T-cell (primary cell): ENCODE measurements at regions of chr6 and their contacts with region 1.

Region 1: GRCh38 chr6:106223300-106223930 is 102.1 kb downstream of the ATG5 start:
- DNase-seq: peak; percentile 22 to 87 (median 68)
- ATAC-seq: peak; percentile 62 to 84 (median 69)
- H3K4me3 ChIP-seq: no peak overlapping the region
- H3K4me3 Mint-ChIP-seq: no peak overlapping the region
- H3K27ac ChIP-seq: no peak overlapping the region
- H3K27ac Mint-ChIP-seq: no peak overlapping the region
- H3K4me1 ChIP-seq: no peaks in the 10 kb centered on the region
- H3K4me1 Mint-ChIP-seq: peaks cover 24 to 30% (median 28%) of the 10 kb centered on the region in 3 donors
- H3K27me3 ChIP-seq: no peaks in the 10 kb centered on the region
- H3K27me3 Mint-ChIP-seq: no peaks in the 10 kb centered on the region

Region 2: DNA sequence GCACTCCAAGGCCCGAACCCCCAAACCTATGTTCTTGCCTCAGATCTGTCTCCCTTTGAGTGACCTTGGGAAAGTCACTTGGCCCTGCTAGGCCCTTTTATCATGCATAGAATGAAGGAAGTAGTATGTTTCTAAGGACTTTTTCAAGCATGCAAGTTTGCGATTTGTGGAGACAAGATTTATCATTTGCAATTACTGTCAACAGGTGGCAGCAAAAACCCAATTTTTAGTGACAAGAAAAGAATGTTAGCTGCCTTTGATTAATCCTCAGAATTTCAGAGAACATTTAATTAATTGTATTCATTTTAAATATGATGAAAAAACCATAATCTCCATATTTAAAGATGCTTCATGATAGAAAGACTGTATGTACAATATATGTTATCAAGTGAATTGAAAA is 792.2 kb before region 1 on chr6:
- CTCF ChIA-PET with region 1: interaction called, 8 to 62 read pairs
- POLR2A ChIA-PET with region 1: no interaction called
- DNase-seq: peak in 7 of 35 experiments; percentile 6 to 73 (median 13)
- ATAC-seq: no peak
- H3K4me3 ChIP-seq: no peak overlapping the region
- H3K4me3 Mint-ChIP-seq: no peak overlapping the region
- H3K27ac ChIP-seq: no peak overlapping the region
- H3K27ac Mint-ChIP-seq: no peak overlapping the region
- H3K4me1 ChIP-seq: no peaks in the 10 kb centered on the region
- H3K4me1 Mint-ChIP-seq: no peaks in the 10 kb centered on the region
- H3K27me3 ChIP-seq: no peaks in the 10 kb centered on the region
- H3K27me3 Mint-ChIP-seq: peaks cover 3 to 5% of the 10 kb centered on the region in 2 donors

Region 3: DNA sequence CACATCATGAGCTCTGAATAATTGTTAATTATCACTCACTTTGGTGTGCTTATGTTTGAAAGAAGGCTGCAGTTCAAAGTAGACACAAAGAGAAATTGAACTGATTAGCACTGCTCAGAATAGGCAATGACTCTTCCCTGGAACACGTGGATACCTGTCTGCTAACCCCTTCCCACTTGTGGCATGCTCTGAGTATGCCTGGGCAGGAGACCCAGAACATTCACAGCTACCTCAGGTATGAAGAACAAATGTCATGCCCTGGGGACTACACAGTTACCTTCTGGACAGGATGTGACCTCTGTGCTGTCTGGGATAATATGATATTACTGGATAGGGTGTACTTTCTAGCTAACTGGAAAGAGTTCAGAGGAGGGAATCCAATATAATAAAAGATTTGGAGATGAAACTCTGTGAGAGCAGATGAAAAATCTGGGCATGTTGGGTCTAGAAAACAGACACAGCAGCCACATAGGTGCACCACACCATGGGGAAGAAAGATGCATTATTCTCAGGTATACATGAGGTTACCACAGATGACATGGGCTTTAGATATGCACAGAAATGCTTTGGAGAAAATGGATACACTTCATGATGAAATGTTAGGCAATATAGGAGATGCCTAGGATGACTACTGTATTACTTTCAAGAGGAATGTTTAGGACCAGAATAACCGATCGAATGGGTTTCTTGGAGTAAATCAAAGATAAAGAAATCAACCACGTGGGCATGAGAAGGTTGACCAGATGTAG is 496.3 kb before region 1 on chr6:
- CTCF ChIA-PET with region 1: interaction called, 14 to 27 read pairs
- POLR2A ChIA-PET with region 1: no interaction called
- DNase-seq: no peak
- ATAC-seq: peak in 1 of 4 experiments; percentile 24
- H3K4me3 ChIP-seq: no peak overlapping the region
- H3K4me3 Mint-ChIP-seq: no peak overlapping the region
- H3K27ac ChIP-seq: no peak overlapping the region
- H3K27ac Mint-ChIP-seq: no peak overlapping the region
- H3K4me1 ChIP-seq: no peaks in the 10 kb centered on the region
- H3K4me1 Mint-ChIP-seq: no peaks in the 10 kb centered on the region
- H3K27me3 ChIP-seq: no peaks in the 10 kb centered on the region
- H3K27me3 Mint-ChIP-seq: peaks cover 0 to 3% of the 10 kb centered on the region in 2 donors

Region 4: DNA sequence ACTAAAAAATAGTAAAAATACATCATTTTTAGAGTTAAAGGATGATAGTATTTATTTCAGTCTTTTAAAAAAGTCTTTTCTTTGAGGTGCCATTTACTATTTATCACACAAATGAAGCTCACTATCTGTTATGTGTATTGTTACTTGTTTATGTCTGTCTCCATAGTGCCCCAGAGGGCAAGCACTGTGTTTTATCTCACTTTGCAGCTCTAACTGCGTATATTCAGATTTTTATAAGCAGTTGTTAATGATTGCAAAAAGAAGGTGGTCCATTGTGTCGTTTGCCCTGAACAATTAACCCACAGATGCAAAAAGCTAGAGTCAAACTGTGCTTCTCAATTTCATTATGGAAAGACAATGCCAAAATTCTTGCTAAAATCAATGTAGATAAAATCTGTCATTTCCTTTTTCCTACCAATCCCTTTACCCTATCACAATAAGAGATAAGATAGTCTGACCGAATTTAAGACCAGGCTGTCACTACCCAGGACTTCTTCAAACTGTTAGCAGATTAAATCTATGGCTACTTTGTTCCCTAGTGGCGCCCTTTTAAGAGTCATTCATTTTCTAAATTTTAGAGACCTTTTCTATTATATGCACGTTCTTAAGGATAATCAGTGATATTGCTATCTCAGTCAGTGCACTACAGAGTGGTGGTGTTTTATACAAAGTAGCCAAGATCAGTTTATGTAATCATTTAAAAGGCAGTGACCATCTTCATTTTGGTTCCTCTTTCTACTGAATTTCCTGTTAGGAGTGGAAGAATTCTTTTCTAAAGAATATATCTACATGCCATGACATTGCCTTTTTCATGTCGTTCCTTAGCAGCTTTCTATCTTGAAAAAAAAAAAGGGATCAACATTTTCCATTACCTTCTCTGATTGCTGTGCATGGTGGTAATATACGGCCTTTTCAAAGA is 270.4 kb before region 1 on chr6:
- CTCF ChIA-PET with region 1: no interaction called
- POLR2A ChIA-PET with region 1: no interaction called
- DNase-seq: no peak
- ATAC-seq: no peak
- H3K4me3 ChIP-seq: no peak overlapping the region
- H3K4me3 Mint-ChIP-seq: no peak overlapping the region
- H3K27ac ChIP-seq: no peak overlapping the region
- H3K27ac Mint-ChIP-seq: no peak overlapping the region
- H3K4me1 ChIP-seq: no peaks in the 10 kb centered on the region
- H3K4me1 Mint-ChIP-seq: no peaks in the 10 kb centered on the region
- H3K27me3 ChIP-seq: no peaks in the 10 kb centered on the region
- H3K27me3 Mint-ChIP-seq: no peaks in the 10 kb centered on the region

Region 5: GRCh38 chr6:106014930-106015329 is 208.5 kb before region 1 on chr6:
- CTCF ChIA-PET with region 1: interaction called in 1 of 2 experiments, 14 read pairs
- POLR2A ChIA-PET with region 1: no interaction called
- DNase-seq: no peak
- ATAC-seq: no peak
- H3K4me3 ChIP-seq: no peak overlapping the region
- H3K4me3 Mint-ChIP-seq: no peak overlapping the region
- H3K27ac ChIP-seq: no peak overlapping the region
- H3K27ac Mint-ChIP-seq: no peak overlapping the region
- H3K4me1 ChIP-seq: no peaks in the 10 kb centered on the region
- H3K4me1 Mint-ChIP-seq: no peaks in the 10 kb centered on the region
- H3K27me3 ChIP-seq: peaks cover 0 to 3% of the 10 kb centered on the region in 2 experiments
- H3K27me3 Mint-ChIP-seq: peaks cover 3 to 17% of the 10 kb centered on the region in 2 donors

Region 6: GRCh38 chr6:106117579-106117978 is 105.8 kb before region 1 on chr6:
- CTCF ChIA-PET with region 1: interaction called, 4 to 14 read pairs
- POLR2A ChIA-PET with region 1: no interaction called
- DNase-seq: peak in 33 of 35 experiments; percentile 46 to 89 (median 77)
- ATAC-seq: peak; percentile 88 to 95 (median 90)
- H3K4me3 ChIP-seq: no peak overlapping the region
- H3K4me3 Mint-ChIP-seq: peak overlapping the region in 1 of 3 donors; percentile 60
- H3K27ac ChIP-seq: peak overlapping the region; percentile 74
- H3K27ac Mint-ChIP-seq: peak overlapping the region; percentile 85
- H3K4me1 ChIP-seq: peaks cover 31 to 56% of the 10 kb centered on the region in 2 experiments
- H3K4me1 Mint-ChIP-seq: peaks cover 64 to 71% (median 65%) of the 10 kb centered on the region in 3 donors
- H3K27me3 ChIP-seq: no peaks in the 10 kb centered on the region
- H3K27me3 Mint-ChIP-seq: peaks cover 0 to 2% of the 10 kb centered on the region in 2 donors

Region 7: DNA sequence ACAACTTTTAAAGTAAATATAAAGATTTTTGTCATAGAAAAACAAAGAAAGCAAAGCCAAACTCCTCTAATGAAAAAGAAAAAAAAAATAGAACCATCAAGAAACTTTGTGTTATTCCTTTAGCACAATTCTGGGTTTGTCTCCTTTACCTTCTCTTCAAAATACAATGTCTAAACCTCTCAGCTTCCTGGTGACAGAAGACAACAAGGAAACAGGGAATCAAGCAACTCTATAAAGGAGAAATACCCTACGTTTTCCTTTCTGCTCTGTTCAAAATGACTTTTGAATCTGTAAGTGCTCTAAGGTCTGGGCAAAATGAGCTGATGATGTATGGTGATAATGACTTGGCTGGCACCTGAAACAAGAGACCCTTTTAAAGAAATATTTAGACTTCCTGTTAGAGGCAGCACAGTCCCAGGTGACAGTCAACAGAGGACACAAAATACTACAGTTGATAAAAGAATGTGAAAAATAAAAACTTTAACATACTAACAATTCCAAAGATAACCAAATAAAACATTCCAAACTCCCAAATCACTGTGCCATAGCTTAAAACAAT is 35.9 kb before region 1 on chr6:
- CTCF ChIA-PET with region 1: interaction called, 6 to 12 read pairs
- POLR2A ChIA-PET with region 1: no interaction called
- DNase-seq: peak in 1 of 35 experiments; percentile 20
- ATAC-seq: peak in 1 of 4 experiments; percentile 42
- H3K4me3 ChIP-seq: no peak overlapping the region
- H3K4me3 Mint-ChIP-seq: no peak overlapping the region
- H3K27ac ChIP-seq: peak overlapping the region; percentile 4
- H3K27ac Mint-ChIP-seq: peak overlapping the region; percentile 7 to 32
- H3K4me1 ChIP-seq: peaks cover 2 to 8% of the 10 kb centered on the region in 2 experiments
- H3K4me1 Mint-ChIP-seq: peaks cover 21 to 54% (median 38%) of the 10 kb centered on the region in 3 donors
- H3K27me3 ChIP-seq: no peaks in the 10 kb centered on the region
- H3K27me3 Mint-ChIP-seq: no peaks in the 10 kb centered on the region

Region 8: DNA sequence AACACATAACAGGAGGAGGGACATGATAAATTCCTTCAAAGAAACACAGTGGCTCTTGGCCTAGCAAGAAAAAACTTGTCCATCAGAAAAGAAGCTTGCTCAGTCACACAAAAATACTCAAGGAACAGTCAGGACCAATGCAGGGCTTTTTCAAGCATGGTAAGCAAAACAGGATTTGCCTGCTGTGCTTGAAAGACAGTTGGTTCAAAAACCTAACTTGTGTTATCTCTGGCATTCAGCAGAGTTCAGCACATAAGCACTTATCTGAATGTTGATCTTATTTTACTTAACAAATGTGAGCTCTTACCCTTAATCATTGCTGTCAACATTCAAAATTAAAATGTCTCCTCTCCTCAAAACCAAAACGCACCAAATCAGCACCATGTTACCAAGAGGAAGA is 63.8 kb after region 1 on chr6:
- CTCF ChIA-PET with region 1: no interaction called
- POLR2A ChIA-PET with region 1: no interaction called
- DNase-seq: no peak
- ATAC-seq: no peak
- H3K4me3 ChIP-seq: no peak overlapping the region
- H3K4me3 Mint-ChIP-seq: no peak overlapping the region
- H3K27ac ChIP-seq: no peak overlapping the region
- H3K27ac Mint-ChIP-seq: no peak overlapping the region
- H3K4me1 ChIP-seq: no peaks in the 10 kb centered on the region
- H3K4me1 Mint-ChIP-seq: peaks cover 36 to 52% (median 42%) of the 10 kb centered on the region in 3 donors
- H3K27me3 ChIP-seq: no peaks in the 10 kb centered on the region
- H3K27me3 Mint-ChIP-seq: no peaks in the 10 kb centered on the region

Region 9: DNA sequence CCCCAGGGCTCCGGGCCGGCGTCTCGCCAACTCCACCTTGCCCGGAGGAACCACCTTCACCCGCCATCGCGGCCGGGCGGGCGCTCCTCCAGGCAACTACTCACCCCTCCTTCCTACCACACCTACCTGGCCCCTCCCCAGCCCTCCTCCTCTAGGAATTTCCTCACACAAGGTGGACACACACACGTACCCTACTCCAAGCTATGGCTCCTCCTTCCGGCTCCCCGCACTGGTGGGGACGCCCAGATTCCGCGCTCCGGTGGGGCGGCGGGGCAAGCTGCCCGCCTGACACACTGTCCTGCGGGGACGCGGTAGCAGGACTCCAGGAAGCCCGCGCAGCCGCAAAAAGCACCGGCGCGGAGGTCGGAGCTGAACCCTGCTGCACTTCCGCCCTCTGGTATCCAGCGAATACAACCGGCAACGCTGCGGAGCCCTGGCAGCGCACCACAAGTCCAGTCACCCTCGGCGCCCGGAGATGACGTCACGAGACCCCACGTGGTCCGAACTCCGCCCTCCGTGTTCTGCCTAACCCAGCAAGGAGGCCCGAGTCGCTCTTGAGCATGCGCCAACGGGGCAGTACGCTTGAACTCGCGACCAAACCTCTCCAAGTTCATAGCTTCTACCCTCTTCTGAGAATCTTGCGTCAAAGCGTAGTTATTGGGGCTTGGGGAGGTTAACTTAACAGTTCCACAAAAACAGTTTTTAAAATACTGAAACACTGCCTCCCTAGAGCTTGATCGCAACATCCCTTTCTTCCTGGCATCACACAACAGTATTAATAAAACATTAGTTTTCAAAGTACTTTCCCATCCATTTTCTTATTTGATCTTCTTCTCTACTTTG is 102.1 kb after region 1 on chr6 and contains the start of gene ATG5:
- CTCF ChIA-PET with region 1: no interaction called
- POLR2A ChIA-PET with region 1: no interaction called
- DNase-seq: peak; percentile 99 to 100 (median 100)
- ATAC-seq: peak; percentile 93 to 95 (median 94)
- H3K4me3 ChIP-seq: peak within 1 kb of the TSS; percentile 82 to 84
- H3K4me3 Mint-ChIP-seq: peak within 1 kb of the TSS; percentile 97 to 100 (median 99)
- H3K27ac ChIP-seq: peak within 1 kb of the TSS; percentile 84
- H3K27ac Mint-ChIP-seq: peak within 1 kb of the TSS; percentile 94 to 96
- H3K4me1 ChIP-seq: peaks cover 15 to 25% of the 10 kb centered on the region in 2 experiments
- H3K4me1 Mint-ChIP-seq: peaks cover 42 to 53% (median 51%) of the 10 kb centered on the region in 3 donors
- H3K27me3 ChIP-seq: peaks cover 0 to under 1% of the 10 kb centered on the region in 2 experiments
- H3K27me3 Mint-ChIP-seq: peaks cover 16 to 19% of the 10 kb centered on the region in 2 donors
- total RNA-seq, gene ATG5: 20.4 to 28.7 (median 23.7) TPM